ENCODE measurements at regions of chr14 and their contacts with region 1.

Region 1: GRCh38 chr14:24299255-24300195 is at the starts of genes DHRS1 and NOP9:
- DNase-seq: peak; percentile 98
- total RNA-seq, gene DHRS1: 14.0 to 17.9 TPM
- total RNA-seq, gene NOP9: 19.2 to 20.9 TPM

Region 2: GRCh38 chr14:24241829-24242443 is 57.6 kb before region 1 on chr14:
- intact Hi-C with region 1: loop called in 1 of 2 experiments (anchors 2 kb)
- DNase-seq: peak; percentile 97

Region 3: DNA sequence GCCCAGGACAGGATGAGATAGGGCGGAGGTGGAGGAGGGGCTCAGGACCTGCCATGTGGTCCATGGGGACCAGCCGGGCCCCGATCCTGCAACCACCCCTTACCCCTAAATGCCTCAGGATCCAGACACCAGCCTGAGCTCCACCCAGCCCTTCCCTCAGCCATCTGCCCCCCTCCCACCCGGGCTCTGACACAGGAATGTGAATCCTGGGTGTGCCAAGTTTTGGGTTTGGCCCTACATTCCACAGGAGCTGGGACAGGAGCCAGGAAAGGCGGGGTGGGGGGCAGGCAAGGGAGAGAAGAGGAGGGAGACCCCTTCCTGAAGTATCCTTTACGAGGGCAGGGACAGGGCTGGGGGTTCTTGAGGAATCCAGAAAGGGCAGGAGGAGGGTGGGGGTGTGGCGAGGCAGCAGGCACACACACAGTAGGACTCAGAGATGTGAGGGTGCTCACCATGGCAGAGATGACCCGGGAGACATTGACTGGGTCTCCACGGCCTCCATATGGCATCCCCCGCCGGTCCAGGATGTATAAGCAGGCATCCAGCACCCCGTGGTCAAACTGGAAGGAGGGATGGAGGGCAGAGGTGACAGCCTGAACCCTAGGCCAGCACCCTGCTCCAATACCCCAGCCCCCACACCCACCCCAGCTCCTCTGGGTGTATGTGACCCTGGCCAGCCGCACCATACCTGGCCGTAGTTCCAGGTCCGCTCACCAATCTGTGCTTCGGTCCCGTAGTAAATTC is 40.1 kb before region 1 on chr14:
- intact Hi-C with region 1: loop called in 1 of 2 experiments (anchors 10 kb)
- DNase-seq: peak; percentile 72